Activated CD4-positive, alpha-beta memory T cell treated with anti-CD3 and anti-CD28 coated beads for 36 hours (primary cell): ENCODE measurements at regions of chr19 and their contacts with region 1.

Region 1: GRCh38 chr19:40716655-40717324 is at the starts of genes COQ8B and ITPKC:
- DNase-seq: peak; percentile 100
- H3K4me3 Mint-ChIP-seq: peak within 1 kb of the TSS; percentile 93
- H3K27ac Mint-ChIP-seq: peak within 1 kb of the TSS; percentile 97
- H3K4me1 Mint-ChIP-seq: peaks cover 54% of the 10 kb centered on the region
- H3K27me3 Mint-ChIP-seq: no peaks in the 10 kb centered on the region
- total RNA-seq, gene COQ8B: 31.7 to 36.3 TPM
- total RNA-seq, gene ITPKC: 6.4 TPM

Region 2: DNA sequence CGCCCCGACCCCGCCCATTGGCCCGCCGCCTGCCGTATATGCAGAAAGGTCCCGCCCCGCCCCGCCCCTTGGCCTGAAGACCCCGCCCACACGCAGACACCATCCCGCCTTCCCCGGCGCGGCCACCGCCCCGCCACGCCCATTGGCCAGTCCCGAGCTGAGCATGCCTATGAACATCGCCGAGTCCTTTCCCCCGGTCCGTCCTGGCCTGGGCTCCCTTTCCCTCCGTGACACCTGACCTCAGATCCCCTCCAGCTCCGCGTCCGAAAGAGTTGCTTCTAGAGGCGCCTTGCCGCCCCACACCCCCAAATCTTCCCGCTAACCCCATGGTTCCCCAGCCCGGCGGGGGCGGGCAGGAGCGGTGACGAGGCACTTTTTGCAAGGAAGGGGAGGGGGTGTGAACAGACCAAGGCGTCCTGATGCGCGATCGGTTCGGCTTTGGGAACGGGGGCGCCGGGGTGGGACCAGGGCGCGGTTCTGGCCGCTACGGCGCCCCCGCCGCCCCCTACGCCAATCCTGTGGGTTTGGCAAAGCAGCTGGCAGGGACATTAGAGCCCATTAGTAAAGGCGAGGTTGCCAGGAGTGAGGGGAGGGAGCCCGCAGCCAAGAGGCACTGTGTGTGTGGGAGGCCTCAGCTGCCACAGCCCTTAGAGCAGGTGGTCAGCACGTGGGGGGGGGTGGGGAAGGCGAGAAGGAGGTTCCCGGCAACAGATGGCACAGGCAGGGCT is 25.9 kb before region 1 on chr19:
- CTCF ChIA-PET with region 1: interaction called, 3 read pairs
- POLR2A ChIA-PET with region 1: interaction called, 4 read pairs
- intact Hi-C with region 1: loop called (anchors 1 kb)
- DNase-seq: peak; percentile 95
- H3K4me3 Mint-ChIP-seq: peak overlapping the region; percentile 79
- H3K27ac Mint-ChIP-seq: peak overlapping the region; percentile 93
- H3K4me1 Mint-ChIP-seq: peaks cover 4% of the 10 kb centered on the region
- H3K27me3 Mint-ChIP-seq: no peaks in the 10 kb centered on the region

Region 3: GRCh38 chr19:40777937-40778705 is 61.3 kb after region 1 on chr19 and contains the start of gene RAB4B:
- CTCF ChIA-PET with region 1: no interaction called
- POLR2A ChIA-PET with region 1: interaction called, 14 read pairs
- intact Hi-C with region 1: loop called (anchors 1 kb)
- DNase-seq: peak; percentile 100
- H3K4me3 Mint-ChIP-seq: peak within 1 kb of the TSS; percentile 91
- H3K27ac Mint-ChIP-seq: peak within 1 kb of the TSS; percentile 92
- H3K4me1 Mint-ChIP-seq: peaks cover 37% of the 10 kb centered on the region
- H3K27me3 Mint-ChIP-seq: no peaks in the 10 kb centered on the region
- total RNA-seq, gene RAB4B: 38.0 to 41.7 TPM

Region 4: DNA sequence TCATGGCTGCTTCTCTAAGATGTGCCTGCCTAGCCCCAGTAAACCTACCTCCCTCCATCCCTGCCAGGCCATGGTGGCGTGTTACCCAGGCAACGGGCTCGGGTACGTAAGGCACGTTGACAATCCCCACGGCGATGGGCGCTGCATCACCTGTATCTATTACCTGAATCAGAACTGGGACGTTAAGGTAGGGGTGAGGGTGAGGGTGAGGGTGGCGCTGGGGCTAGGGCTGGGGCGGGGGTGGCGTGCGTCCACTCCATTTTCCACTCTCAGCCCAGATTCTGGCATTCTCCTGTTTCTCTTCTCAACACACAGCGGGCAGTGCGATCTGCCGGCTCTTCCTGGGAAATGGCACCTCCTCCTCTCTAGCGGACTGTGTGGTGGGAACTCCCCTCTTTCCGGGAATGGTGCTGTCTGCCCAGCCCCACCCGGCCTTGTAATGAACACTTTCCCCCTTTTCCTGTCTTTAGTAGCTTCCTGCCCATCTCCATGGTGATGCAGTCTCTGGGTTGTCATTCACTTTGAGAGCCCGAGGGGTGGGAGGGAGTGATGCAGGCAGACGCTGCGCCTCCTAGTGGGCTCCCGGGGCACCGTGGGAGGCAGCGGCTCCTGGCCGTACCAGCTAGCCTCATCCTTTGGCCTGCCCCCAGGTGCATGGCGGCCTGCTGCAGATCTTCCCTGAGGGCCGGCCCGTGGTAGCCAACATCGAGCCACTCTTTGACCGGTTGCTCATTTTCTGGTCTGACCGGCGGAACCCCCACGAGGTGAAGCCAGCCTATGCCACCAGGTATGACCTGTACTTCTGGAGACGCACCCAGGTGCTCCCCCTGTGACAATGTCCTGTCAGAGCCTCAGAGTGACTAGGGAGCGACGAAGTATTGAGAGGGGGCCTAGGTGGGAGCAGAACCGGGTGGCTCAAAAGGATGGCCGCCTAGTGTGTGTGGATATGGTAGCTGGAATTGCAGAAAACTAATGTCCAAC is 90.0 kb after region 1 on chr19:
- CTCF ChIA-PET with region 1: interaction called, 11 read pairs
- POLR2A ChIA-PET with region 1: interaction called, 3 read pairs
- intact Hi-C with region 1: no loop called
- DNase-seq: peak; percentile 89
- H3K4me3 Mint-ChIP-seq: peak overlapping the region; percentile 67
- H3K27ac Mint-ChIP-seq: peak overlapping the region; percentile 89
- H3K4me1 Mint-ChIP-seq: peaks cover 81% of the 10 kb centered on the region
- H3K27me3 Mint-ChIP-seq: no peaks in the 10 kb centered on the region